ENCODE measurements at regions of chr12 and their contacts with region 1.

Region 1: GRCh38 chr12:131132118-131132892 is 178.6 kb downstream of the ADGRD1 start:
- DNase-seq: peak; percentile 78 to 87
- H3K4me3 ChIP-seq: no peak overlapping the region
- H3K4me3 Mint-ChIP-seq: no peak overlapping the region
- H3K27ac Mint-ChIP-seq: no peak overlapping the region
- H3K4me1 ChIP-seq: no peaks in the 10 kb centered on the region
- H3K4me1 Mint-ChIP-seq: no peaks in the 10 kb centered on the region
- H3K27me3 ChIP-seq: no peaks in the 10 kb centered on the region
- H3K27me3 Mint-ChIP-seq: peaks cover 7% of the 10 kb centered on the region
- CTCF ChIP-seq: peak; percentile 77 to 80

Region 2: DNA sequence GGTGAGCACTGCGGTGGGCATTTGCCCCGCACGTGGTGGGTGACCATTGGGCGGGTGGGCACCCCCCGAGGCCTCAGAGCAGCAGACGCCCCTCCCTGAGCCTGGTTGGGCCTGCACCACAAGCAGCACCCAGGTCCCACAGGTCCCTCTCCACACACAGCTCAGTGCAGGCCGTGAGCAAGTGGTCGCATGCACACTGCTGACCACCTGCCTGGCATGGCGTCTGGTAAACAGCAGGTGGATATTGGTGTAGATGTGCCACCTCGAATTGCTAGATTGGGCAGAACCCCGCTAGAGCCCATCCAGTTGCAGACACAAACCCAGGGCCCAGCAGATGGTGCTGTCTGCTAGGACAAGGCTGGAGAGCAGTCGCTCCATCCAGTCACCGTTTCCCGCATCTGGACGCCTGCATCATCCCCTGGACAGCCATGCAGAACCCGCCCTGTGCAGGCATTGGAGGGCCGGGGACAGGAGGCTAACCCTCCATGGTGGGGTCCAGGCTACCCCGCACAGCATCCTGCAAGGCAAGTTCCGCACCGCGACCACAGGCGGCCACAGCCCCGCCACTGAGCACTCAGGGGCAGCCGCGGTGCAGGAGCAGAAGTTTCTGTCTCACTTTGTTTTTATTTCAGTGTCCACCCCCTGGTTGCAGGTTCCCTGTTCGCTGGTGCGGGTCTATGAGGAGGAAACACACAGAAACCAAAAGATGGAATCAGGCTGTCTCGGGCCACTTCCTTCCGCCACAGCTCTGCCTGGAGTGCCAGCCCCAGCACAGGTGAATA is 370.6 kb before region 1 on chr12:
- CTCF ChIA-PET with region 1: no interaction called
- POLR2A ChIA-PET with region 1: no interaction called
- intact Hi-C with region 1: loop called (anchors 1 kb)
- DNase-seq: peak; percentile 72 to 76
- H3K4me3 ChIP-seq: no peak overlapping the region
- H3K4me3 Mint-ChIP-seq: no peak overlapping the region
- H3K27ac Mint-ChIP-seq: no peak overlapping the region
- H3K4me1 ChIP-seq: peaks cover 5% of the 10 kb centered on the region; the same call in 1 of the 2 replicates
- H3K4me1 Mint-ChIP-seq: no peaks in the 10 kb centered on the region
- H3K27me3 ChIP-seq: no peaks in the 10 kb centered on the region
- H3K27me3 Mint-ChIP-seq: no peaks in the 10 kb centered on the region
- CTCF ChIP-seq: peak; percentile 68 to 77

Region 3: GRCh38 chr12:131104463-131105350 is 27.6 kb before region 1 on chr12:
- CTCF ChIA-PET with region 1: interaction called, 29 read pairs
- POLR2A ChIA-PET with region 1: no interaction called
- intact Hi-C with region 1: loop called (anchors 1 kb)
- DNase-seq: peak; percentile 82 to 88
- H3K4me3 ChIP-seq: no peak overlapping the region
- H3K4me3 Mint-ChIP-seq: no peak overlapping the region
- H3K27ac Mint-ChIP-seq: no peak overlapping the region
- H3K4me1 ChIP-seq: no peaks in the 10 kb centered on the region
- H3K4me1 Mint-ChIP-seq: no peaks in the 10 kb centered on the region
- H3K27me3 ChIP-seq: no peaks in the 10 kb centered on the region
- H3K27me3 Mint-ChIP-seq: no peaks in the 10 kb centered on the region
- CTCF ChIP-seq: peak; percentile 94

Region 4: GRCh38 chr12:131116391-131117117 is 15.8 kb before region 1 on chr12:
- CTCF ChIA-PET with region 1: interaction called, 12 read pairs
- POLR2A ChIA-PET with region 1: no interaction called
- intact Hi-C with region 1: no loop called
- DNase-seq: no peak
- H3K4me3 ChIP-seq: no peak overlapping the region
- H3K4me3 Mint-ChIP-seq: no peak overlapping the region
- H3K27ac Mint-ChIP-seq: no peak overlapping the region
- H3K4me1 ChIP-seq: no peaks in the 10 kb centered on the region
- H3K4me1 Mint-ChIP-seq: no peaks in the 10 kb centered on the region
- H3K27me3 ChIP-seq: no peaks in the 10 kb centered on the region; the same call in 1 of the 2 replicates
- H3K27me3 Mint-ChIP-seq: peaks cover 9% of the 10 kb centered on the region
- CTCF ChIP-seq: peak in 1 of 2 experiments; percentile 28

Region 5: DNA sequence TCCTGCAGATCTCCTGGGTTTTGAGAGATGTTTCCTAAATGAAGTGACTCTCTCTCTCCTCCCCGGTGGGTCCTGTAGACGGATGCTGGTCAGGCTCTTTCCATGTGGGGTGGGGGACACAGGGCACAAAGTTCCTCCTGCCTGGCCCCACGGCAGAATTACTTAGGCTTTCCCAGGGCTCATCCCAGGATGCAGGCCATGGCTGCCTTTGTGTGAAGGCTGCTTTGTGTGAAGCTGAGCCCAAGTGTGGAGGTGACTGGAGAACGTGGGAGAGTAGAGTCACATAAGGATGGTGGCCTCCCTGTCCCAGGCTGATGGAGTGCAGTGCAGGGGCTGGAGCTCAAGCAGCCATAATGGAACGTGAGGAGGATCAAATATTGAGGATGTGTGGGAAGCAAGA is 21.7 kb after region 1 on chr12:
- CTCF ChIA-PET with region 1: no interaction called
- POLR2A ChIA-PET with region 1: no interaction called
- intact Hi-C with region 1: no loop called
- DNase-seq: no peak
- H3K4me3 ChIP-seq: no peak overlapping the region
- H3K4me3 Mint-ChIP-seq: no peak overlapping the region
- H3K27ac Mint-ChIP-seq: no peak overlapping the region
- H3K4me1 ChIP-seq: no peaks in the 10 kb centered on the region
- H3K4me1 Mint-ChIP-seq: no peaks in the 10 kb centered on the region
- H3K27me3 ChIP-seq: no peaks in the 10 kb centered on the region
- H3K27me3 Mint-ChIP-seq: no peaks in the 10 kb centered on the region
- CTCF ChIP-seq: no peak

Measured in Caco-2 (cell line).